ENCODE measurements at regions of chr22 and their contacts with region 1.

Region 1: GRCh38 chr22:31970490-31971444 is 26.4 kb downstream of the YWHAH start:
- DNase-seq: peak; percentile 78 to 92 (median 79)
- ATAC-seq: peak; percentile 92 to 97 (median 94)
- H3K4me3 ChIP-seq: peak overlapping the region in 11 of 12 donors; percentile 21 to 63 (median 47)
- H3K27ac ChIP-seq: peak overlapping the region in 1 of 12 donors; percentile 16
- H3K4me1 ChIP-seq: peaks cover 0 to 13% (median 7%) of the 10 kb centered on the region in 12 donors
- H3K27me3 ChIP-seq: no peaks in the 10 kb centered on the region
- CTCF ChIP-seq: peak; percentile 88 to 97 (median 94)
- POLR2A ChIP-seq: no peak

Region 2: GRCh38 chr22:31561238-31561887 is 409.4 kb before region 1 on chr22:
- intact Hi-C with region 1: loop called in 1 of 10 experiments (anchors 10 kb)
- DNase-seq: peak; percentile 57 to 74 (median 69)
- ATAC-seq: peak; percentile 83 to 98 (median 96)
- H3K4me3 ChIP-seq: no peak overlapping the region
- H3K27ac ChIP-seq: no peak overlapping the region
- H3K4me1 ChIP-seq: peaks cover 0 to 6% (median 0%) of the 10 kb centered on the region in 12 donors
- H3K27me3 ChIP-seq: no peaks in the 10 kb centered on the region
- CTCF ChIP-seq: peak; percentile 59 to 79 (median 68)
- POLR2A ChIP-seq: no peak

Region 3: DNA sequence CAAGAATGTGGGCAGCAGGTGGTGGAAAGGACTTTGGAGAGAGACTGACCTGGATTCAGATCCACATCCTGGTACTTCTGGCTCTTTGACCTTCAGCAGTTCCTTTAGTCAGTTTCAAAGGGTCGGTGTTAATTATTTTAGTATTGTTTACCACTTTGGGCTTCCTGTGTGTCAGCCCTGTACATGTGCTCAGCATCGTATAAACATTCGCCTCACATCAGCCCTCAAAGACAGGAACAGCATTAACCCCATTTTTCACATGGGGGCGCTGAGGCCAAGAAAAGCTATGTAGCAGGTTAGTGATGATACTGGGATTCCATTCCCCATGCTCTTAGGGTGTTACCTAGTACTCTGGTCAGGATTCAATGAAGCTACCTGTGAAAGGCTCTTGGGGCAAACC is 98.6 kb before region 1 on chr22:
- intact Hi-C with region 1: loop called in 2 of 10 experiments (anchors 5 to 10 kb)
- DNase-seq: no peak
- ATAC-seq: peak in 1 of 4 donors; percentile 36
- H3K4me3 ChIP-seq: no peak overlapping the region
- H3K27ac ChIP-seq: no peak overlapping the region
- H3K4me1 ChIP-seq: peaks cover 0 to 14% (median 0%) of the 10 kb centered on the region in 12 donors
- H3K27me3 ChIP-seq: no peaks in the 10 kb centered on the region
- CTCF ChIP-seq: peak in 6 of 12 donors; percentile 12 to 39 (median 21)
- POLR2A ChIP-seq: no peak

Region 4: GRCh38 chr22:32265882-32266767 is 295.4 kb after region 1 on chr22:
- intact Hi-C with region 1: loop called in 9 of 10 experiments (anchors 1 to 10 kb)
- DNase-seq: peak in 4 of 5 donors; percentile 56 to 73 (median 58)
- ATAC-seq: peak in 3 of 4 donors; percentile 59 to 70 (median 61)
- H3K4me3 ChIP-seq: peak overlapping the region in 2 of 12 donors; percentile 12 to 28
- H3K27ac ChIP-seq: no peak overlapping the region
- H3K4me1 ChIP-seq: peaks cover 0 to 8% (median 0%) of the 10 kb centered on the region in 12 donors
- H3K27me3 ChIP-seq: no peaks in the 10 kb centered on the region
- CTCF ChIP-seq: peak; percentile 74 to 90 (median 86)
- POLR2A ChIP-seq: no peak

Region 5: GRCh38 chr22:32474635-32475467 is 504.1 kb after region 1 on chr22 and contains the start of gene FBXO7:
- intact Hi-C with region 1: loop called in 5 of 10 experiments (anchors 5 to 10 kb)
- DNase-seq: peak; percentile 93 to 96 (median 95)
- ATAC-seq: peak; percentile 33 to 94 (median 92)
- H3K4me3 ChIP-seq: peak within 1 kb of the TSS; percentile 55 to 100 (median 96)
- H3K27ac ChIP-seq: peak within 1 kb of the TSS; percentile 86 to 100 (median 99)
- H3K4me1 ChIP-seq: peaks cover 8 to 37% (median 29%) of the 10 kb centered on the region in 12 donors
- H3K27me3 ChIP-seq: no peaks in the 10 kb centered on the region
- CTCF ChIP-seq: peak in 7 of 12 donors; percentile 32 to 69 (median 60)
- POLR2A ChIP-seq: peak in 1 of 2 donors; percentile 73
- total RNA-seq, gene FBXO7: 32.8 to 63.0 (median 42.5) TPM